ENCODE measurements at regions of chr11 and their contacts with region 1.

Region 1: GRCh38 chr11:94241896-94242295 is 62.5 kb upstream of the IZUMO1R start:
- DNase-seq: no peak
- ATAC-seq: no peak
- H3K4me3 Mint-ChIP-seq: no peak overlapping the region
- H3K27ac Mint-ChIP-seq: no peak overlapping the region
- H3K4me1 Mint-ChIP-seq: no peaks in the 10 kb centered on the region
- H3K27me3 Mint-ChIP-seq: peaks cover 7% of the 10 kb centered on the region; the same call in 1 of the 2 replicates
- CTCF ChIP-seq: no peak

Region 2: GRCh38 chr11:94020777-94021481 is 221.0 kb before region 1 on chr11 and contains the start of gene HEPHL1:
- CTCF ChIA-PET with region 1: no interaction called
- POLR2A ChIA-PET with region 1: no interaction called
- DNase-seq: peak; percentile 29
- ATAC-seq: peak; percentile 99
- H3K4me3 Mint-ChIP-seq: no peak within 1 kb of the TSS
- H3K27ac Mint-ChIP-seq: no peak within 1 kb of the TSS
- H3K4me1 Mint-ChIP-seq: peaks cover 8% of the 10 kb centered on the region
- H3K27me3 Mint-ChIP-seq: no peaks in the 10 kb centered on the region
- CTCF ChIP-seq: no peak
- total RNA-seq, gene HEPHL1: 0.07 to 0.13 TPM (median 0.07 TPM) in 3 replicates

Region 3: GRCh38 chr11:94183886-94184264 is 58.0 kb before region 1 on chr11:
- CTCF ChIA-PET with region 1: interaction called, 30 read pairs
- POLR2A ChIA-PET with region 1: no interaction called
- DNase-seq: peak; percentile 88
- ATAC-seq: peak; percentile 86
- H3K4me3 Mint-ChIP-seq: no peak overlapping the region
- H3K27ac Mint-ChIP-seq: peak overlapping the region; percentile 60
- H3K4me1 Mint-ChIP-seq: peaks cover 19% of the 10 kb centered on the region
- H3K27me3 Mint-ChIP-seq: no peaks in the 10 kb centered on the region
- CTCF ChIP-seq: peak; percentile 91

Measured in WTC11 (cell line).